ENCODE measurements at regions of chr12 and their contacts with region 1.

Region 1: DNA sequence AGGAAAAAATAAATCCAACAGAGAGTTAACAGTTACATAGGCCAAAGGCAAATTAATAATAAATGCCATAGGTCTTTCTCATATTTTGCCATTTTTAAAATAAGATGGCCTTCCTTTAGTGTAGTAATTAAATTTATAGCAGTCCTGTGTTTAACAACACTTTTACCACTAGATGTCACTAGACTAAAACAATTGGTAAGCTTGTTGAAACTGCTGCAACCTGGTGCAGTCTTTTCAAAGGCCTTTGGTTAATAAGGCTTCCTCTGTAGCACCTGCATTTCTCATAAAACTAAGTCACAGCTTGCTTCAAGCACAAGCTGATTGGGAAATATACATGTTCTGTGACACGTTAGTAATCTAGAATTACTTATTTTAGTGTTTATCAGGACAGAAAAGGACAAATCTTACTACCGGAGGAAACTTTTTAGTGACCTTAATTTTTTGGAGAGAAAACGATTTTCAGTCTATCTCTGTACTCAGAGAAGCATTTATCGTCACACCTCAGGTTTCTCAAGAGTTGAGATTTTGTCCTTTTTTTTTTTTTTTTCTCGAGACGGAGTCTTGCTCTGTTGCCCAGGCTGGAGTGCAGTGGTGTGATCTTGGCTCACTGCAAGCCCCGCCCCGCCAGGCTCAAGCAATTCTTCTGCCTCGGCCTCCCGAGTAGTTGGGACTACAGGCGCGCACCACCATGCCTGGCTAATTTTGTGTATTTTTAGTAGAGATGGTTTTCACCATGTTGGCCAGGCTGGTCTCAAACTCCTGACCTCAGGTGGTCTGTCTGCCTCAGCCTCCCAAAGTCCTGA is 20.0 kb downstream of the BORCS5 start:
- DNase-seq: no peak
- ATAC-seq: peak; percentile 78 to 90 (median 89)
- H3K4me3 ChIP-seq: no peak overlapping the region
- H3K27ac ChIP-seq: no peak overlapping the region
- H3K4me1 ChIP-seq: peaks cover 4 to 8% (median 7%) of the 10 kb centered on the region in 3 donors
- H3K27me3 ChIP-seq: no peaks in the 10 kb centered on the region
- CTCF ChIP-seq: peak; percentile 25 to 65 (median 57)

Region 2: DNA sequence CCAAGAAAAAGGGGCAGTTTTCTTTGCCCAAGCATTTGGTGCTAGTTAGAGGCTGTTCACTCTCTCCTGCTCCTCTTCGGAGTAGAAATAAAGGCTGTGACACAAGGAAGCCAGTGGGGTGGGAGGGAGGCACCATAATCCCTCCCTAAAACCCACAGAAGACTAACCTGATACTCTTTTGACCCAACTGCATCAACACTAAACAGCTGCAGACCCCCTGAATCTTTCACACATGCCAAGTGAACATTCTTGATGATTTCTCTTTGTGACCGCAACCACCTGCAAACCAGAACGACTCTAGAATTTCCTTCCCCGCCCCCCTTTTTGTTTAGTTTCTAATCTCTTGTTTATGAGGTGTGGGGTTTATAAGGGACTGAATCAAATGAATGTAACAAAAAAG is 482.0 kb before region 1 on chr12:
- intact Hi-C with region 1: no loop called
- DNase-seq: no peak
- ATAC-seq: no peak
- H3K4me3 ChIP-seq: no peak overlapping the region
- H3K27ac ChIP-seq: no peak overlapping the region
- H3K4me1 ChIP-seq: no peaks in the 10 kb centered on the region
- H3K27me3 ChIP-seq: no peaks in the 10 kb centered on the region
- CTCF ChIP-seq: no peak

Region 3: GRCh38 chr12:12024911-12025682 is 351.8 kb before region 1 on chr12:
- intact Hi-C with region 1: no loop called
- DNase-seq: no peak
- ATAC-seq: peak in 3 of 4 donors; percentile 42 to 58 (median 44)
- H3K4me3 ChIP-seq: no peak overlapping the region
- H3K27ac ChIP-seq: no peak overlapping the region
- H3K4me1 ChIP-seq: no peaks in the 10 kb centered on the region
- H3K27me3 ChIP-seq: no peaks in the 10 kb centered on the region
- CTCF ChIP-seq: no peak

Region 4: GRCh38 chr12:12562585-12563261 is 185.9 kb after region 1 on chr12 and contains the start of gene DUSP16:
- intact Hi-C with region 1: loop called in 1 of 3 experiments (anchors 10 kb)
- DNase-seq: peak; percentile 94 to 96 (median 95)
- ATAC-seq: peak; percentile 83 to 91 (median 89)
- H3K4me3 ChIP-seq: peak within 1 kb of the TSS; percentile 35 to 93 (median 69)
- H3K27ac ChIP-seq: peak within 1 kb of the TSS; percentile 89 to 100 (median 99)
- H3K4me1 ChIP-seq: peaks cover 10 to 31% (median 19%) of the 10 kb centered on the region in 3 donors
- H3K27me3 ChIP-seq: no peaks in the 10 kb centered on the region
- CTCF ChIP-seq: no peak
- total RNA-seq, gene DUSP16: 18.1 to 38.7 (median 27.8) TPM

Region 5: GRCh38 chr12:12654691-12655460 is 278.0 kb after region 1 on chr12:
- intact Hi-C with region 1: loop called in 1 of 3 experiments (anchors 5 kb)
- DNase-seq: no peak
- ATAC-seq: no peak
- H3K4me3 ChIP-seq: no peak overlapping the region
- H3K27ac ChIP-seq: no peak overlapping the region
- H3K4me1 ChIP-seq: no peaks in the 10 kb centered on the region
- H3K27me3 ChIP-seq: no peaks in the 10 kb centered on the region
- CTCF ChIP-seq: no peak

Region 6: GRCh38 chr12:12673296-12673695 is 296.4 kb after region 1 on chr12:
- intact Hi-C with region 1: no loop called
- DNase-seq: no peak
- ATAC-seq: no peak
- H3K4me3 ChIP-seq: no peak overlapping the region
- H3K27ac ChIP-seq: no peak overlapping the region
- H3K4me1 ChIP-seq: no peaks in the 10 kb centered on the region
- H3K27me3 ChIP-seq: no peaks in the 10 kb centered on the region
- CTCF ChIP-seq: no peak

Region 7: DNA sequence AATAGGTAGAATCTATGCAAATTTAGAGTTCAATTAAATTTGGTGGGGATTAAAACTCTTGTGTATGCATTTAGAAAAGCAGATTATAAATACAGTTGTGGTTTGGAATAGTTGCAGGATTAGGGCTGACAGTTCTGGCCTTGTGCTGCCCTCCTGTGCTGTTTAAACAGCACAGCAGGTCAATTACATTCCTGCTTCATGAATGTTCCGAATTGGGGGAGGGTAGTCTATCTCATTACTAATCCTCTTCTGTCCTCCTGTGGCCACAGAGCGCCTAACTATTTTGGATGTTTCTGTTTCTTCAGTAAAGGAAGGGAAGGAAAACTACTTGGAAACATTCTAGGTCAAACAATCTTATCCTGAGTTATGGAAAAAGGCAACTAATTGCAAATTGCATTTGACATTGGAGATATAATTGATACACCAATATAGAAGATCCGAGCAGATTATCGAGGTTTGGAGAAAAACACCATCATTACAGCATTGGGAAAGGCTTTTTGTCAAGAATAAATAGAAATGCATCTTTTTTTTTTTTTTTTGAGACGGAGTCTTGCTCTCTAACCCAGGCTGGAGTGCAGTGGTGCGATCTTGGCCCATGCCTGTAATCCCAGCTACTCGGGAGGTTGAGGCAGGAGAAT is 327.9 kb after region 1 on chr12:
- intact Hi-C with region 1: loop called in 1 of 3 experiments (anchors 10 kb)
- DNase-seq: peak in 4 of 6 donors; percentile 43 to 65 (median 64)
- ATAC-seq: peak; percentile 99 to 100 (median 100)
- H3K4me3 ChIP-seq: no peak overlapping the region
- H3K27ac ChIP-seq: peak overlapping the region in 1 of 4 donors; percentile 24
- H3K4me1 ChIP-seq: peaks cover 6 to 9% (median 7%) of the 10 kb centered on the region in 3 donors
- H3K27me3 ChIP-seq: no peaks in the 10 kb centered on the region
- CTCF ChIP-seq: peak; percentile 55 to 84 (median 70)

Region 8: GRCh38 chr12:12716793-12717585 is 340.1 kb after region 1 on chr12 and contains the start of gene CDKN1B:
- intact Hi-C with region 1: loop called in 1 of 3 experiments (anchors 10 kb)
- DNase-seq: peak; percentile 93 to 96 (median 96)
- ATAC-seq: peak; percentile 84 to 90 (median 90)
- H3K4me3 ChIP-seq: peak within 1 kb of the TSS; percentile 75 to 89 (median 82)
- H3K27ac ChIP-seq: peak within 1 kb of the TSS; percentile 98 to 100 (median 99)
- H3K4me1 ChIP-seq: peaks cover 10 to 49% (median 45%) of the 10 kb centered on the region in 3 donors
- H3K27me3 ChIP-seq: no peaks in the 10 kb centered on the region
- CTCF ChIP-seq: no peak
- total RNA-seq, gene CDKN1B: 12.8 to 23.7 (median 16.9) TPM